A549 (cell line): ENCODE measurements at regions of chr15 and their contacts with region 1.

Region 1: DNA sequence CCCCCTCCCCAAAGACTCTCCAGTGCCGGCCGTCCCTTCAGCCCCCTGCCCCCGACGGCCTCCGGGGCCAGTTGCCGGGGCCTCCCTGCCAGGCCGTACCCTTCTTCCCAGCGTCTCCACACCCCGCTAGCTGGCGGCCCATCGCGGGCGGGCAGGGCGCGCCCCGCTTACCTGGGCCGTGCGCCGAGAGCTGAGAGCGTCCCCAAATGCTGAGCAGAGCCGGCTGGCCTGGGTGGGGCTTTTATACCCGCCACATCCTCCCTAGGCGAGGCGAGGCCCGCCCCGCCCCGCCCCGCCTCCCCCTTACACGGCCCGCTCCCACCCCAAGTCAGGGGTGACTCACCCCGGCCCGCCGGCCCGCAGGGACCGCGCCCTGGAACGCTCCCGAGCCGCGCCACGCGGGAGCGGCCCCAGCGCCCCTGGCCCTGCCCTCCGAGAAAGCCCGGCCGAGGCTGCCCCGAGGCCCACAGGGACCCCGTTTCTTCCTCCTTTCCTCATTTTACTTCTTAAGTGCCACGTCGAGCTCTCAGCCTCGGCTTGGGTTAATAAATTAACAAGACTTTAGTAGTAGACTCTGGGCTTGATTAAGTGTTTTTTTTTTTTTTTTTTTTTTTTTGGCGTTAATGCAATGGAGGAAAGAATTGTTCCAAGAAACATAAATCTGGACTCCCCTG is at the start of gene ANXA2:
- DNase-seq: peak; percentile 84 to 95
- ATAC-seq: peak; percentile 62 to 72
- H3K4me3 ChIP-seq: peak within 1 kb of the TSS; percentile 88
- H3K27ac ChIP-seq: peak within 1 kb of the TSS; percentile 97 to 99
- H3K4me1 ChIP-seq: peaks cover 59% of the 10 kb centered on the region
- CTCF ChIP-seq: no peak
- EP300 ChIP-seq: peak in 1 of 2 experiments; percentile 37; a peak in 1 of 5 replicates
- POLR2A ChIP-seq: peak; percentile 92
- RAD21 ChIP-seq: no peak
- polyA plus RNA-seq, gene ANXA2: 5,725 and 5,746 TPM in 2 replicates

Region 2: GRCh38 chr15:60379525-60380274 is 18.2 kb before region 1 on chr15:
- CTCF ChIA-PET with region 1: interaction called, 23 read pairs
- POLR2A ChIA-PET with region 1: interaction called, 152 read pairs
- DNase-seq: peak in 1 of 2 experiments; percentile 95
- ATAC-seq: peak; percentile 40 to 41
- H3K4me3 ChIP-seq: peak overlapping the region; percentile 20
- H3K27ac ChIP-seq: peak overlapping the region; percentile 90
- H3K4me1 ChIP-seq: peaks cover 99% of the 10 kb centered on the region
- CTCF ChIP-seq: no peak
- EP300 ChIP-seq: peak; percentile 95 to 98
- POLR2A ChIP-seq: no peak
- RAD21 ChIP-seq: no peak; a peak in 4 of 5 replicates

Region 3: DNA sequence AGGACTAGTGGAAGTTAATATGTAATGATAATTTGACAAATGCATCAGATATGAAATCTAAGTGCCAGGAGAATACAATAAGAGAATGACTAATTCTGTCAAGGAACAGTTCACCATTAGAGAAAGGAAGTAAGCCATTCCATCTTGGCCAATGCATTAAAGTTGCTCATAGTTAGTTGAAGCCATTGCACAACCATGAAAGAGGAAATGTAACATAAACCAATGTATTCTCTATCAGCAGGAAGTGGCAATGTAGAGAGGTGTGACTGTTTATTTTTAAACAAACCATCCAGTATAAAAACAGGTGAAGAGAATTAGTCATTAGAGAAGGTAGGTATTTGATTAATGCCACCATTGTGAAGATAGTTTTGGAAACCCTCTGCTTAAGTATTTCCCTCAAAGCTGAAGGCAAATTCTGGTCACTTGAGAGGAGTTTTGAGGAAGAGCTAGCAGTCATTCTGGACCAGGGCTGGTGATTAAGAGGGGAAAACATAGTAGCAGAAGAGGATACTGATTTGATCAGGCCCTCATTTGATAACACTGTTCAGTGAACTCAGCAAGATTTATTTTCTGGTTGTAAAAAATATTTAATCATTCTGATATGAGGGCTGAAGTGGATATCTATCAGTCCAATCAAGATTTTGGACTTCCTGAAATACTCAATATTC is 10.7 kb after region 1 on chr15:
- CTCF ChIA-PET with region 1: interaction called, 8 read pairs
- POLR2A ChIA-PET with region 1: interaction called, 152 read pairs
- DNase-seq: peak; percentile 86 to 92
- ATAC-seq: peak; percentile 81 to 85
- H3K4me3 ChIP-seq: no peak overlapping the region
- H3K27ac ChIP-seq: peak overlapping the region; percentile 90
- H3K4me1 ChIP-seq: peaks cover 59% of the 10 kb centered on the region
- CTCF ChIP-seq: no peak
- EP300 ChIP-seq: peak; percentile 82 to 90; a peak in 3 of 5 replicates
- POLR2A ChIP-seq: no peak
- RAD21 ChIP-seq: peak in 1 of 2 experiments; percentile 29; a peak in 3 of 5 replicates

Region 4: DNA sequence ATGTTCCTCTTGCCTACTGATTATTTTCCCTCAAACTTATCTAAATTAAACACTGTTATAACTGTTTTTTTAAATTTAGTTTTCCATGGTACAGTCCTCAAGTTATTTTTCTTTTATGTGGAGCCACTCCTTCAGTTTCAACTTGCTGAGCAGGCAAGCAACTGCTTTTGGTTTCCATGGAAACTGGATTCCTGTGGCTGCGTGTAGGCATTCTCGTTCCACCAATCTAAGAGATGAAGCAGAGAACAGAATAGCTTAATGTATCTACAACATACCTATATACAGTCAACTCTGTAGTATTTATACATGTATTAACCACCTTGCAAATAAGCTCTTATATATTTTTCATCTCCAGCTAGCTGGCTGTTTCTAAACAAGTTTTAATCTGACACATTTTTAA is 25.6 kb after region 1 on chr15:
- CTCF ChIA-PET with region 1: interaction called, 3 read pairs
- POLR2A ChIA-PET with region 1: interaction called, 66 read pairs
- DNase-seq: peak; percentile 29 to 80
- ATAC-seq: peak; percentile 77 to 81; a peak in 4 of 6 replicates
- H3K4me3 ChIP-seq: no peak overlapping the region
- H3K27ac ChIP-seq: peak overlapping the region; percentile 2 to 62; a peak in 2 of 6 replicates
- H3K4me1 ChIP-seq: peaks cover 73% of the 10 kb centered on the region
- CTCF ChIP-seq: no peak
- EP300 ChIP-seq: no peak
- POLR2A ChIP-seq: no peak
- RAD21 ChIP-seq: no peak